Aorta (tissue), 5 donors: ENCODE measurements at regions of chr4 and their contacts with region 1.

Region 1: DNA sequence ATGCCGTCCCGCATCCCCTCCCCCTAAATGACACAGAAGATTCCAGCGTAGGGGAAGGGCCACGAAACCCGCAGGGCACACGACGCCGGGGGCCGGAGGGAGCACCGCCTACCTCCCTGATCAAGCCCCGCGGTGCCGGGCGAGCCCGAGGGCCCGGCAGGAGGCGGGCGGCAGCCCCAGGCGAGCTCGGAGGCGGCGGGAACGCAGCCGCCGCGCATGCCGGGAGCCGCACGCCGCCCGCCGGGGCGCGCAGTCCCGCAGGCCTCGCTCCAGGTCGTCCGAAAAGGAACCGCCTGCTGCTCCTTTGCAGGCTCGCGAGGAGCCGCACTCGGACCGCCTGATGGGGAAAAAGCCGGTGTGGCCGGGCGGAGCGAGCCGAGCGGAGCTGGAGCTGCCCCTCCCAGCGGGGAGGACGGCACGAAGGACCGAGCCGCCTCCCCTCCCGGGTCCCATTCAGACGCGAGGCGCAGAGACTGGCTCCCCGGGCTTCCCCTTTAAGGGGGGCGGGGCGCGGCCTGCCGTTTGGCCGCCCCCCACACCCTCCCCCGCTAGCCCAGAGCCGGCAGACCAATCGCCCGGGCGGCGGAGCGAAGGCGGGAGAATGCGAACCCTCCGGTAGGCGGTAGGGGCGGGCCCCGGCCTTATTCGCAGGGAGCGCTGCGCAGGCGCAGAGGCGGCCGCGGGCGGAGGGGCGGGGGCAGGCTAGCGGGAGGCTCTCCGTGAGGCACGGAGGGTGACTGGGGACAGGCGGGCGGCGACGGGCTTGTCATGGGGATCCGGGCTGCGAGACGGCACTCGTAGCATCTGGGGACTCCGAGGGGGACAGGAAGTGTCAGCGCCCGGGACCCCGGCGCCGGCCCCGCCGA is 561 bp upstream of the ING2 start:
- DNase-seq: peak; percentile 100
- ATAC-seq: peak; percentile 98
- H3K4me3 ChIP-seq: peak overlapping the region; percentile 86 to 94
- H3K27ac ChIP-seq: peak overlapping the region; percentile 59 to 82
- H3K4me1 ChIP-seq: no peaks in the 10 kb centered on the region
- H3K27me3 ChIP-seq: no peaks in the 10 kb centered on the region

Region 2: GRCh38 chr4:183098723-183099536 is 405.4 kb before region 1 on chr4 and contains the start of gene WWC2:
- intact Hi-C with region 1: loop called in 1 of 2 experiments (anchors 10 kb)
- DNase-seq: peak; percentile 95 to 96
- ATAC-seq: peak; percentile 95
- H3K4me3 ChIP-seq: peak within 1 kb of the TSS; percentile 79 to 96
- H3K27ac ChIP-seq: peak within 1 kb of the TSS; percentile 95 to 96
- H3K4me1 ChIP-seq: peaks cover 0 to 1% of the 10 kb centered on the region in 2 donors
- H3K27me3 ChIP-seq: no peaks in the 10 kb centered on the region
- total RNA-seq, gene WWC2: 42.8 to 50.3 TPM

Region 3: GRCh38 chr4:183444214-183445066 is 59.9 kb before region 1 on chr4 and contains the start of gene CDKN2AIP:
- intact Hi-C with region 1: loop called in 1 of 2 experiments (anchors 2 kb)
- DNase-seq: peak; percentile 96 to 98
- ATAC-seq: peak; percentile 98
- H3K4me3 ChIP-seq: peak within 1 kb of the TSS; percentile 78 to 87
- H3K27ac ChIP-seq: peak within 1 kb of the TSS; percentile 91 to 93
- H3K4me1 ChIP-seq: no peaks in the 10 kb centered on the region
- H3K27me3 ChIP-seq: no peaks in the 10 kb centered on the region
- total RNA-seq, gene CDKN2AIP: 12.0 to 15.4 TPM

Region 4: DNA sequence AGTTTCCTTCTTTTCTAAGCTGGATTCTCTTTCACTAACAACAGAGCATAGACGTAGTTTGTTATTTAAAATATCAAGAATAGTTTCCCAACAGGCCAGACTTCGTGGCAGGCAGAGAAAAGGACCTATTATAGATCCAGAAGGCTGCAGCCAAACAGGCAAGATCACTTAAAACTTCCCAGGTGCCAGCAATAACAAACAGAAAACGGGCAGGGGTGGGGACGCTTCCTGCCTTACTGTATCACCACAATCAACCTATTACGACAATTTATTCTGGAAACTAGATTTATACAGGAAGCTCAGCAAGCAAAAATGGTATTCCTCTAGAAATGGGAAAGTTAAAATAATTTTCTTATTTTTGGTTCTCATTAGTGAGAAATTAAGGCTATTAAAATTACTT is 132.6 kb after region 1 on chr4:
- intact Hi-C with region 1: loop called in 1 of 2 experiments (anchors 5 kb)
- DNase-seq: peak in 1 of 2 donors; percentile 57
- ATAC-seq: peak; percentile 55
- H3K4me3 ChIP-seq: peak overlapping the region in 1 of 2 donors; percentile 49
- H3K27ac ChIP-seq: peak overlapping the region; percentile 54 to 65
- H3K4me1 ChIP-seq: peaks cover 0 to 3% of the 10 kb centered on the region in 2 donors
- H3K27me3 ChIP-seq: no peaks in the 10 kb centered on the region

Region 5: DNA sequence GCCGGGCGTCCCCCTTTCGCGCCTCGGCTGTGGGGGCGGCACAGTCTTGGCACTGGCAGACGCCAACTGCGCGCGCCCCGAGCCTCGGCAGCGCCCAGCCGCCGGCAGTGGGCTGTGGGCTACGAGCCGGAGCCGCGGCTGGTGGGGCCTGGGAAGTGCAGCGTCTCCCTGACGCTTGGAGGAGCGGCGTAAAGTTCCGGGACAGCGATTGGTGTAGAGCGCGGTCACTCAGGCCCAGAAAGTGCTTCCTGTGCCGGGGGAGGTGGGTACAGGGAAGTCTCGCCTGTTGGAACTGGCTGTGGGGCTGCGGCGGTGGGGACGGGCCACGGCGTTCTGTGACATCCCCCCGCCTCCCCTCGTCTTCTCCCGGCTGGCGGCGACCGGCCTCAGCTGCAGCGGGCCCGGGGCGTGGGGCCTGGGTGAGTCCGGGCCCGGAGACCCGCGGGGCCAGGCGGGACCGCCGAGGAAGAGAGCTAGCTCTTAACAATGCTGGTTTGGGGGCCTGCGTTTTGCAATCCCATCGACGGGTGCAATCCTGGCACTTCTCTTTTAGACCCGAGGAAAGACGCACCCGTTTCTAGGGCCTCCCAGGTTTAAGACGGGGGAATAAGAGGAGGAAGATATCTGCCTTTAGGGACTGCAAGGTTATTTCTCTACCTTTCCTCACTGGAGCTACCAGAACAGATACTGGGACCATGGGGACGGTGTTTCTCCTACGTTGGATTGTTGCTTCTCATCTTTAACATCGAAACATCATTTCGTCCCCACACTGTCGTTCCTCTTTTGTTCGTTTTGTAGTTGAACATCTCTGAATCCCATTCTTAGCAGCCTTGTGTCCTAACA is 155.0 kb after region 1 on chr4 and contains the starts of genes RWDD4 and TRAPPC11:
- intact Hi-C with region 1: loop called (anchors 1 to 2 kb)
- DNase-seq: peak; percentile 99
- ATAC-seq: peak; percentile 100
- H3K4me3 ChIP-seq: peak within 1 kb of the TSS; percentile 97
- H3K27ac ChIP-seq: peak within 1 kb of the TSS in 1 of 2 donors; percentile 92
- H3K4me1 ChIP-seq: peaks cover 0 to 6% of the 10 kb centered on the region in 2 donors
- H3K27me3 ChIP-seq: no peaks in the 10 kb centered on the region
- total RNA-seq, gene RWDD4: 17.3 to 20.2 TPM
- total RNA-seq, gene TRAPPC11: 31.9 to 44.6 TPM

Region 6: GRCh38 chr4:183675625-183676024 is 171.3 kb after region 1 on chr4:
- intact Hi-C with region 1: no loop called
- DNase-seq: no peak
- ATAC-seq: no peak
- H3K4me3 ChIP-seq: no peak overlapping the region
- H3K27ac ChIP-seq: no peak overlapping the region
- H3K4me1 ChIP-seq: no peaks in the 10 kb centered on the region
- H3K27me3 ChIP-seq: no peaks in the 10 kb centered on the region